ENCODE measurements at regions of chr17 and their contacts with region 1.

Region 1: DNA sequence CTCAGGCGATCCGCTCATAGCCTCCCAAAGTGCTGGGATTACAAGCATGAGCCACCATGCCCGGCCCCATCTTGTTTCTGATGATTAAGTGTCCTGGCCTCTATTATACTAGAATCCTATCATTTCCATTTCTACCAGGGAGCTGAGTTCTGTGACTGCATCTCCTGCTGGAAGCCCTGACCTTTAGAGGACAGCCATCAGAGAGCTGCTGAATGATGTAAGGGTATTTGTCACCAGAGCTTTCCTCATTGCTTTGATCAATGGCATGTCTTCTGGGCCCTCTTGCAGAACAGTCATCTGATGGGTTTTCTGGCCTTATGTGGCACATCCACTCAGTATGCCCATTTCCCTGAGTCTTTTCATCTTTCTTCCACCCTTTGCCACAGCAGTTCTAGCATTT is 39.9 kb downstream of the PSMD12 start:
- DNase-seq: no peak
- H3K4me3 Mint-ChIP-seq: no peak overlapping the region
- H3K27ac Mint-ChIP-seq: no peak overlapping the region
- H3K4me1 Mint-ChIP-seq: no peaks in the 10 kb centered on the region
- H3K27me3 Mint-ChIP-seq: no peaks in the 10 kb centered on the region
- CTCF ChIP-seq: no peak

Region 2: DNA sequence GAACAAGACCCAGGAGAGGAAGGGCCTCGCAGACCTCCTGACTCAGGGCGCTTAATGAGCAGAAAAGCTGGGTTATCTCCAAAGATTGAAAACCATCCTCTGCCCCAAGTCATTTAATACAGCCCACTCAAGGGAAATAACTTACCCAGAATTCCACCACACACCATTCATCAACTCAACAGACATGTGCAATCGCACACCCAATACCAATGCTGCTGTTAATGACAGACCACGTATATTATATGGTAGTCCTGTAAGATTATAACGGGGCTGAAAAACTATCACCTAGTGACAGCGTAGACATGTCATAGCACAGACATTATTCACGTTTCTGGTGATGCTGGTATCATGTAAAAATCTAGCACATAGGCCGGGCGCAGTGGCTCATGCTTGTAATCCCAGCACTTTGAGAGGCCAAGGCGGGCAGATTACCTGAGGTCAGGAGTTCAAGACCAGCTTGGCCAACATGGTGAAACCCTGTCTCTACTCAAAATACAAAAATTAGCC is 28.9 kb before region 1 on chr17:
- CTCF ChIA-PET with region 1: no interaction called
- POLR2A ChIA-PET with region 1: no interaction called
- intact Hi-C with region 1: no loop called
- DNase-seq: no peak
- H3K4me3 Mint-ChIP-seq: no peak overlapping the region
- H3K27ac Mint-ChIP-seq: no peak overlapping the region
- H3K4me1 Mint-ChIP-seq: no peaks in the 10 kb centered on the region
- H3K27me3 Mint-ChIP-seq: no peaks in the 10 kb centered on the region
- CTCF ChIP-seq: no peak

Region 3: GRCh38 chr17:67343251-67343650 is 16.8 kb after region 1 on chr17:
- CTCF ChIA-PET with region 1: no interaction called
- POLR2A ChIA-PET with region 1: interaction called, 10 read pairs
- intact Hi-C with region 1: no loop called
- DNase-seq: no peak
- H3K4me3 Mint-ChIP-seq: no peak overlapping the region
- H3K27ac Mint-ChIP-seq: peak overlapping the region; percentile 2
- H3K4me1 Mint-ChIP-seq: peaks cover 7% of the 10 kb centered on the region
- H3K27me3 Mint-ChIP-seq: no peaks in the 10 kb centered on the region
- CTCF ChIP-seq: no peak

Region 4: DNA sequence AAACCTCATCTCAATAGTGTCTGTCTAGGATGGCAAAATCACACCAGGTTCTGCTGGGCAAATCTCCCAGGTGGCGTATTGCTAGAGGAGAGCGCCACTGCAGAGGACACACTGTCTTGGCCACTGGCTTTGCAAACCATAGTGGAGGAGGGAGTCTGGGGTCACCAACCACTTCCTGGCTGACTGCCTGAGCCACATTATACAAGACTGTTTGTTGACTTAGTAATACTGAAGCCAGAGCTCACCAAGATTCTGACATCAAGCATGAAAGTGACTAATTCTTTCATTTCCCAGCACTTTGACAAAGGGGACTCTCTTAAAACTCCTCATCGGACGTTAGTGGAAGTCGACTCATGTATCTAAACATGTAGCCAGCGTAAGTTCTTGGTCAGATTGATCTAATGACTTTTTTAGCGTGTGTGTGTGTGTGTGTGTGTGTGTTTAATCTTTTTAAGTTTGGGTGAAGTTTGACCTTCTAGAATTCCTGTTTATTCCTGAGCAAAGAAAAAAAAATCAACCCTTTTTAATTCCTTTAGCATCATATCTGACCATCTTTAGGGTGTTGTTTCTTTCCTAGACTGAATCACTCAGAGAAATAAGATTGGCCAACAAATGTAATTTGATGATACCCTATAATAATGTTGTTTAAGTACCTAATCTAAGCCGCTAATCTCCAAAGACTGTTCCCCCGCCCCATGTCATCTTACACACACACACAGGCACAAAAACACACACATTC is 64.4 kb after region 1 on chr17:
- CTCF ChIA-PET with region 1: no interaction called
- POLR2A ChIA-PET with region 1: no interaction called
- intact Hi-C with region 1: no loop called
- DNase-seq: peak; percentile 92
- H3K4me3 Mint-ChIP-seq: peak overlapping the region; percentile 53
- H3K27ac Mint-ChIP-seq: peak overlapping the region; percentile 83
- H3K4me1 Mint-ChIP-seq: peaks cover 20% of the 10 kb centered on the region
- H3K27me3 Mint-ChIP-seq: no peaks in the 10 kb centered on the region
- CTCF ChIP-seq: no peak

Region 5: GRCh38 chr17:67421869-67422273 is 95.4 kb after region 1 on chr17:
- CTCF ChIA-PET with region 1: no interaction called
- POLR2A ChIA-PET with region 1: no interaction called
- intact Hi-C with region 1: no loop called
- DNase-seq: peak; percentile 99
- H3K4me3 Mint-ChIP-seq: peak overlapping the region; percentile 29
- H3K27ac Mint-ChIP-seq: peak overlapping the region; percentile 86
- H3K4me1 Mint-ChIP-seq: peaks cover 35% of the 10 kb centered on the region
- H3K27me3 Mint-ChIP-seq: no peaks in the 10 kb centered on the region
- CTCF ChIP-seq: no peak